ENCODE measurements at regions of chr1 and their contacts with region 1.

Region 1: GRCh38 chr1:117758444-117759316 is 152.8 kb downstream of the TENT5C start:
- DNase-seq: no peak
- H3K4me3 ChIP-seq: peak overlapping the region; percentile 37 to 45
- H3K27ac ChIP-seq: peak overlapping the region; percentile 60
- H3K4me1 ChIP-seq: peaks cover 20% of the 10 kb centered on the region
- H3K27me3 ChIP-seq: no peaks in the 10 kb centered on the region
- CTCF ChIP-seq: peak; percentile 41 to 90 (median 78)
- POLR2A ChIP-seq: no peak

Region 2: GRCh38 chr1:117534995-117535467 is 223.6 kb before region 1 on chr1:
- intact Hi-C with region 1: loop called (anchors 5 kb)
- DNase-seq: no peak
- H3K4me3 ChIP-seq: no peak overlapping the region
- H3K27ac ChIP-seq: no peak overlapping the region
- H3K4me1 ChIP-seq: no peaks in the 10 kb centered on the region
- H3K27me3 ChIP-seq: no peaks in the 10 kb centered on the region
- CTCF ChIP-seq: peak in 2 of 3 experiments; percentile 38 to 59
- POLR2A ChIP-seq: no peak

Region 3: GRCh38 chr1:117942293-117942692 is 183.6 kb after region 1 on chr1:
- intact Hi-C with region 1: no loop called
- DNase-seq: no peak
- H3K4me3 ChIP-seq: no peak overlapping the region
- H3K27ac ChIP-seq: no peak overlapping the region
- H3K4me1 ChIP-seq: no peaks in the 10 kb centered on the region
- H3K27me3 ChIP-seq: no peaks in the 10 kb centered on the region
- CTCF ChIP-seq: no peak
- POLR2A ChIP-seq: no peak